Ascending aorta (tissue), 2 donors: ENCODE measurements at regions of chrX and their contacts with region 1.

Region 1: GRCh38 chrX:68828740-68829552 is at the start of gene EFNB1:
- DNase-seq: peak; percentile 84 to 96
- H3K4me3 ChIP-seq: peak within 1 kb of the TSS; percentile 59 to 65
- H3K27ac ChIP-seq: peak within 1 kb of the TSS; percentile 76 to 82
- H3K4me1 ChIP-seq: no peaks in the 10 kb centered on the region
- H3K27me3 ChIP-seq: no peaks in the 10 kb centered on the region
- CTCF ChIP-seq: no peak
- total RNA-seq, gene EFNB1: 53.4 TPM

Region 2: GRCh38 chrX:68686097-68686977 is 142.6 kb before region 1 on chrX:
- intact Hi-C with region 1: no loop called
- DNase-seq: no peak
- H3K4me3 ChIP-seq: peak overlapping the region in 1 of 2 donors; percentile 60
- H3K27ac ChIP-seq: peak overlapping the region; percentile 16 to 28
- H3K4me1 ChIP-seq: no peaks in the 10 kb centered on the region
- H3K27me3 ChIP-seq: no peaks in the 10 kb centered on the region
- CTCF ChIP-seq: no peak

Region 3: DNA sequence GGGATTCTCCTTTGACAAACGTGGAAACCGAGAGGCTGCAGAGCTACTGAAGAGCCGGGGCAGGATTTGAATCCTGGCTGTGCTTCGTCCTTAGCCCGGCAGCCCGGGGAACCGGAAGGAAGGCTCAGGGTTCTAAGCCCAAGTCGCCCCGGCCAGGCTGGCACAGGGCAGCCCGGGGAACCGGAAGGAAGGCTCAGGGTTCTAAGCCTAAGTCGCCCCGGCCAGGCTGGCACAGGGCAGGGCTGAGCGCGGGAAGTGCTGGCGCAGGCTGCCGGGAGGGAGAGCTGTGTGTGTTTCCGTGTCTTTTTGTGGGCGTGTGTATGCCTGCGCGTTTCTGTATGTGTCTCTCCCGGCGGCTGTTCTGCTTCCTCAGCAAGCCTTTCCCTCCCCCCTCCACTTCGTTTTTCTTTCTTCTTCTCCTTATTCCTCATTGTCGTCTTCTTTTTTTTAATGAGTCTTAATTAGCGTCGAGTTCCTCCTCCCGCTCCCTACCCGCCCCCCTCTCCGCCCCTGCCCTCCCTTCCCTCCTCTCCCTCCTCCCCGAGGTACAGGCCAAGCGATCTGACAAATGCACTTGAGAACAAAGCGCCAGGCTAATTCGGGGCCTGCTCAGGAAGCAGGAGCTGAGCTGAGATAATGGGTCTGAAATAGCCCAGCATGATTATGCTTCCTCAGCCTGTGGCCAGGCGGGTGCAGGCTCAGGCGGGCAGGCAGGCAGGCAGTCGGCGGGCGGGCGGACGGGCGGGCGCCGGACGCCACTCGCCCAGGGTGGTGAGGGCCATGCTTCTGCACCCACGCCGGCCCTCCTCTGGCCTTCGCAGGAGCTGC is 65.8 kb after region 1 on chrX:
- intact Hi-C with region 1: loop called (anchors 1 kb)
- DNase-seq: peak; percentile 31 to 84
- H3K4me3 ChIP-seq: peak overlapping the region in 1 of 2 donors; percentile 54
- H3K27ac ChIP-seq: peak overlapping the region; percentile 97
- H3K4me1 ChIP-seq: peaks cover 3 to 13% of the 10 kb centered on the region in 2 donors
- H3K27me3 ChIP-seq: no peaks in the 10 kb centered on the region
- CTCF ChIP-seq: no peak

Region 4: GRCh38 chrX:68908071-68908470 is 79.1 kb after region 1 on chrX:
- intact Hi-C with region 1: no loop called
- DNase-seq: no peak
- H3K4me3 ChIP-seq: no peak overlapping the region
- H3K27ac ChIP-seq: no peak overlapping the region
- H3K4me1 ChIP-seq: no peaks in the 10 kb centered on the region
- H3K27me3 ChIP-seq: no peaks in the 10 kb centered on the region
- CTCF ChIP-seq: no peak

Region 5: GRCh38 chrX:69165087-69165651 is 336.2 kb after region 1 on chrX and contains the start of gene PJA1:
- intact Hi-C with region 1: loop called (anchors 2 kb)
- DNase-seq: peak; percentile 16 to 87
- H3K4me3 ChIP-seq: peak within 1 kb of the TSS; percentile 61 to 76
- H3K27ac ChIP-seq: peak within 1 kb of the TSS; percentile 80 to 86
- H3K4me1 ChIP-seq: no peaks in the 10 kb centered on the region
- H3K27me3 ChIP-seq: no peaks in the 10 kb centered on the region
- CTCF ChIP-seq: no peak
- total RNA-seq, gene PJA1: 26.9 TPM

Region 6: DNA sequence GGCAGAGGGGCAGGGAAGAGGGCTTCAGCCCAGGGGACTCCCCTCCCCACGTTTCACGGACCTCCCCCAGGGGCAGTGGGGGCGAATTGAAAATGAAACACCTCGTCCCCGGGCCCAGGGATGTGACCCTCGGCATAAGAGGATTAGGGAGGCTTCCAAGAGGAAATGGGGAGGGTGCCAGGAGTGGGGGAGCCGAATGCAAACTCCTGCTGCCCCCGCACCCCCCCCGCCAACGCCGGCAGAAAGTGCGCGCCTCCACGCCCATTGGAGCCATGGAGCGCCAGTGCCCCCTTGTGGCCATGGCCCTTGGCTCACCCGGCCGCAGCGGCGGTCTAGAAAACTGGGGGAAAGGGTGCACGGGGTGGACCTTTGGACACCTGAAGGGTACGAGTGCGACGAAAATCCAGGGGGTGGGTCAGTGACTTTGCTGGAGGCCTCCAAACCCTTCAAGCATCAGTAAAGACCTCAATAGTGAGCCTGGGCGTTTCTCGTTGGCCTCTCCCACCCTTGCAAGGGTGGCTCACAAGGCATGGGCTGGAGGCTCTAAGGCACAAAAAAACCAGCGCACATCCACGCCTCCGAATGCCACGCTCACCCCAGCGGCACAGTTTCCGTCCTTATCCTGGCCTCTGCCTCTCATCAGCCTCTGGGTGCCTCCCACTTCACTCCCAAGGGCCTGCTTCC is 457.1 kb after region 1 on chrX:
- intact Hi-C with region 1: loop called (anchors 2 kb)
- DNase-seq: peak in 1 of 2 donors; percentile 71
- H3K4me3 ChIP-seq: peak overlapping the region; percentile 53 to 61
- H3K27ac ChIP-seq: peak overlapping the region in 1 of 2 donors; percentile 38
- H3K4me1 ChIP-seq: peaks cover 0 to 3% of the 10 kb centered on the region in 2 donors
- H3K27me3 ChIP-seq: no peaks in the 10 kb centered on the region
- CTCF ChIP-seq: peak; percentile 68 to 94 (median 88)

Region 7: GRCh38 chrX:69615779-69616456 is 787.0 kb after region 1 on chrX and contains the start of gene EDA:
- intact Hi-C with region 1: loop called (anchors 2 kb)
- DNase-seq: peak; percentile 27 to 89
- H3K4me3 ChIP-seq: peak within 1 kb of the TSS; percentile 55 to 89
- H3K27ac ChIP-seq: peak within 1 kb of the TSS in 1 of 2 donors; percentile 21
- H3K4me1 ChIP-seq: no peaks in the 10 kb centered on the region
- H3K27me3 ChIP-seq: no peaks in the 10 kb centered on the region
- CTCF ChIP-seq: no peak
- total RNA-seq, gene EDA: 1.7 TPM